AG04449 (cell line): ENCODE measurements at regions of chr10 and their contacts with region 1.

Region 1: GRCh38 chr10:16986406-16987205 is 143.0 kb downstream of the CUBN start:
- DNase-seq: peak; percentile 83
- H3K4me3 ChIP-seq: no peak overlapping the region
- CTCF ChIP-seq: no peak

Region 2: GRCh38 chr10:16968416-16969041 is 18.1 kb before region 1 on chr10:
- CTCF ChIA-PET with region 1: interaction called, 4 read pairs
- POLR2A ChIA-PET with region 1: interaction called, 12 read pairs
- DNase-seq: no peak
- H3K4me3 ChIP-seq: no peak overlapping the region
- CTCF ChIP-seq: no peak

Region 3: DNA sequence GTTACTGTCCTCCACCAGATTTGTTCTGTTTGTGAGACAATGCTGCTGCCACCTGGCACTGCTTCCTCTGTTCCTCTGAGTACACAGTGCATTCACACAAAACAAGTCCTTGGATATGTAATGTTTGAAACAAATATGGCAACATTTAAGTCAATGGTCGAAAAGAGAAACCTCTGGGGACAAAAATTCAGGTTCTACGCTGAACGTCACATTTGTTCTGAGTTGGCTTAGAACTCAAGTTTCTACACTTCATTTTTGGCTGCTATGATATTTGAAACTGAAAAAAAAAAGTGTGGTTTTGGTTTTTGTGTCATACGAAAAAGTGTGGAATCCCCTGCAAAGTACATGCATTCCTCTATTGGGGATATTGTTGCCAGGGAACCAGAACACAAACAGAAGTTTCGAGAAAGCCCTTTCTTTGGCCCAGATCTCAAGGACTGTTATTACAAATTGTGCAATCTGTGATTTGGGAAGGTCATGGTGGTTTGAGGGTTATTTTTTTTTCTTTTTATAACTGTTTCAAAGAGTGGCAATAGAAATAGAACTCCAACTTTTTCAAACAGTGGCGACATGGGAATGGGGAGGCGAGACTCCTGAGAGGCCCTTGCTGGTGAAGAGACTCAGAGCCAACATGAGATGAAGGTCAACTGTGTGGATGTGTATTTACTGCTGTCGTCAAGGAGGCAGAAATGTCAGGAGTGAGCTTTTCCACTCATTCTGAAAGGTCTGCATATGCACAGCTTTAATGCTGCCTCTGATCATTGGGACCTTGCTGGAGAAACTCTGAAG is 15.5 kb after region 1 on chr10:
- CTCF ChIA-PET with region 1: interaction called, 12 read pairs
- POLR2A ChIA-PET with region 1: interaction called, 4 read pairs
- DNase-seq: peak; percentile 92
- H3K4me3 ChIP-seq: no peak overlapping the region
- CTCF ChIP-seq: no peak